PC-9 (cell line): ENCODE measurements at regions of chr19 and their contacts with region 1.

Region 1: GRCh38 chr19:10269333-10270179 is 1.4 kb upstream of the ICAM1 start:
- DNase-seq: peak; percentile 62 to 83
- H3K4me3 ChIP-seq: peak overlapping the region; percentile 64; the same call in 1 of the 2 replicates
- H3K27ac ChIP-seq: no peak overlapping the region
- H3K4me1 ChIP-seq: peaks cover 25% of the 10 kb centered on the region
- H3K27me3 ChIP-seq: no peaks in the 10 kb centered on the region
- CTCF ChIP-seq: peak; percentile 100

Region 2: GRCh38 chr19:10074153-10074552 is 195.4 kb before region 1 on chr19:
- CTCF ChIA-PET with region 1: no interaction called
- POLR2A ChIA-PET with region 1: no interaction called
- intact Hi-C with region 1: no loop called
- DNase-seq: no peak
- H3K4me3 ChIP-seq: no peak overlapping the region
- H3K27ac ChIP-seq: no peak overlapping the region
- H3K4me1 ChIP-seq: no peaks in the 10 kb centered on the region
- H3K27me3 ChIP-seq: peaks cover 78% of the 10 kb centered on the region
- CTCF ChIP-seq: peak; percentile 58

Region 3: GRCh38 chr19:10095948-10096621 is 173.5 kb before region 1 on chr19:
- CTCF ChIA-PET with region 1: no interaction called
- POLR2A ChIA-PET with region 1: no interaction called
- intact Hi-C with region 1: no loop called
- DNase-seq: peak; percentile 77 to 95
- H3K4me3 ChIP-seq: peak overlapping the region; percentile 56
- H3K27ac ChIP-seq: no peak overlapping the region
- H3K4me1 ChIP-seq: peaks cover 11% of the 10 kb centered on the region
- H3K27me3 ChIP-seq: no peaks in the 10 kb centered on the region
- CTCF ChIP-seq: no peak

Region 4: GRCh38 chr19:10315335-10316214 is 46.0 kb after region 1 on chr19 and contains the start of gene FDX2:
- CTCF ChIA-PET with region 1: interaction called, 3 read pairs
- POLR2A ChIA-PET with region 1: interaction called, 17 read pairs
- intact Hi-C with region 1: loop called (anchors 2 kb)
- DNase-seq: peak; percentile 85 to 87
- H3K4me3 ChIP-seq: peak within 1 kb of the TSS; percentile 96
- H3K27ac ChIP-seq: peak within 1 kb of the TSS; percentile 38
- H3K4me1 ChIP-seq: peaks cover 14% of the 10 kb centered on the region
- H3K27me3 ChIP-seq: no peaks in the 10 kb centered on the region
- CTCF ChIP-seq: no peak
- total RNA-seq, gene FDX2: 23.1 and 29.2 TPM in 2 replicates

Region 5: DNA sequence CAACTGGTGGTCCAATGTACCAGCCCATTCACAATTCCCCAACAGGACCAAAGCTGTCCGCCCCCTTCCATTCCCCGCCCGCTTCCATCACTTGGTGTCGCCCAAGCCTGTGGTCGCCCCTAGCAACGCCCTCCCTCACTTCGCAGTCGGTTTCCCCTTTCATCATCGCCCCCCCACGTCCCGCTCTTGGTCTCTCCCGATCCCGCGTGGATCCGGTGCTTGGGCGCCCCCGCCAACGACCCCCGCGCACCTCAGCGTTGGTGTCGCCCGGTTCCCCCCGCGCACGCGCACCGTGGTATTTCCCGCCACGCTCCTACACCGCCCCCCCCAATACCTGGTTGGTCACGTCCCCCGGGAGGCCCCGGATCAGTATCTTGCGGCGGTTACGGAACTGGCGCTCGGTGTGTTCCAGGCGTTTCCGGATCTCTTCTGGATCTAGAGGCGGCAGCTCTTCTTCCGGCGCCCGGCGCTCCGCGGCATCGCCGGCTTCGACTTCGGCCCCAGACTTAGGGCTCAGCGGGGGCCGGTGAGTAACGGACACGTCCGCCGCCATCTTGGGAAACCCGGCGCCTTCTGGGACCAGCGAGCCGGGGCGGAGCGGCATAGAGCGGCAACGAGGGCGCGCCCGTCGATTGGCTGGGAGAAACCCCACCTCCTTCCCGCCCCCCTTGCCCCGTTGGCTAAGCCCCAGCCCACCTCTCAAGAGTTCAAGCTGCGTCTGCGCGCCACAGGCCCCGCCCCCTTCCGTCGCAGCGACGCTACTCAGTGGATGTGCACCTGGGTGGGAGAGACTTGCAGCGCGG is 63.6 kb after region 1 on chr19 and contains the start of gene RAVER1:
- CTCF ChIA-PET with region 1: no interaction called
- POLR2A ChIA-PET with region 1: interaction called, 7 read pairs
- intact Hi-C with region 1: loop called (anchors 1 kb)
- DNase-seq: peak; percentile 91 to 95
- H3K4me3 ChIP-seq: peak within 1 kb of the TSS; percentile 78
- H3K27ac ChIP-seq: peak within 1 kb of the TSS; percentile 55
- H3K4me1 ChIP-seq: peaks cover 10% of the 10 kb centered on the region
- H3K27me3 ChIP-seq: no peaks in the 10 kb centered on the region
- CTCF ChIP-seq: no peak
- total RNA-seq, gene RAVER1: 52.9 and 83.9 TPM in 2 replicates

Region 6: DNA sequence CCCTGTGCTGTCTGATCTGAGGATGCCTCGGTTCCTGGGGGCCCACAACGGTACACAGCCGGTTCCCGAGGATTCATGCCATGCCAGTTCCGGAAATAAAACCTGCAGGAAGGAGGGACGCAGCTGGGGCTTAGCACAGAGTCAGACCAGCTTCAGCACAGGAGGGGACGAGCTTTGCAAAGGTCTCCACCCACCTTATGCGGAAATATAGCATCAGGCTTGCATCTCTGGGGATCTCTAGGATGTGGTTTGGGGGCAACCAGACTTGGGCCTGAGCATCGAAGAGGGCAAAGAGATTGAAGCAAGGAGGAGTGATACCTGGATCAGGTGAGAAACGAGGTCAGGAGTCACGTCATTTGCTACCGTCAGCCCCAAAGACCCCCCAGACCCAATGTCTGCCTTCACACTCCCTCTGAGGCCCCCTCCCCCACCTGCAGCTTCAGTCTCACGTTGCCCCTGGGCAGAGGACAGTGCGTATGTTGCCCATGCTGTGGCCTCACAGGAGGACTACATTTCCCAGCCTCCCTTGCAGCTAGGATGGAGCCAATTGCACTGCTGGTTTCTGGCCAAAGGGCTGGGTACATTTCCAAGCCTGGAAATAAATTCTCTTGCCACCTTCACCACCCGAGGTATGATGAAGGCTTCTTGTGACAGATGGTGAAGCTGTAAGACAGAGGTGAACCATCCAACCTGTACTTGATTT is 98.7 kb after region 1 on chr19:
- CTCF ChIA-PET with region 1: no interaction called
- POLR2A ChIA-PET with region 1: interaction called, 10 read pairs
- intact Hi-C with region 1: no loop called
- DNase-seq: no peak
- H3K4me3 ChIP-seq: no peak overlapping the region
- H3K27ac ChIP-seq: no peak overlapping the region
- H3K4me1 ChIP-seq: no peaks in the 10 kb centered on the region
- H3K27me3 ChIP-seq: no peaks in the 10 kb centered on the region
- CTCF ChIP-seq: no peak

Region 7: GRCh38 chr19:10388957-10389356 is 119.4 kb after region 1 on chr19:
- CTCF ChIA-PET with region 1: interaction called, 11 read pairs
- POLR2A ChIA-PET with region 1: interaction called, 4 read pairs
- intact Hi-C with region 1: loop called (anchors 1 kb)
- DNase-seq: peak; percentile 62 to 81
- H3K4me3 ChIP-seq: no peak overlapping the region
- H3K27ac ChIP-seq: no peak overlapping the region
- H3K4me1 ChIP-seq: no peaks in the 10 kb centered on the region
- H3K27me3 ChIP-seq: no peaks in the 10 kb centered on the region
- CTCF ChIP-seq: peak; percentile 99